GM13976 (cell line): ENCODE measurements at regions of chr1 and their contacts with region 1.

Region 1: GRCh38 chr1:22889213-22889827 is 83.3 kb downstream of the LACTBL1 start:
- DNase-seq: peak; percentile 67
- CTCF ChIP-seq: peak; percentile 39

Region 2: DNA sequence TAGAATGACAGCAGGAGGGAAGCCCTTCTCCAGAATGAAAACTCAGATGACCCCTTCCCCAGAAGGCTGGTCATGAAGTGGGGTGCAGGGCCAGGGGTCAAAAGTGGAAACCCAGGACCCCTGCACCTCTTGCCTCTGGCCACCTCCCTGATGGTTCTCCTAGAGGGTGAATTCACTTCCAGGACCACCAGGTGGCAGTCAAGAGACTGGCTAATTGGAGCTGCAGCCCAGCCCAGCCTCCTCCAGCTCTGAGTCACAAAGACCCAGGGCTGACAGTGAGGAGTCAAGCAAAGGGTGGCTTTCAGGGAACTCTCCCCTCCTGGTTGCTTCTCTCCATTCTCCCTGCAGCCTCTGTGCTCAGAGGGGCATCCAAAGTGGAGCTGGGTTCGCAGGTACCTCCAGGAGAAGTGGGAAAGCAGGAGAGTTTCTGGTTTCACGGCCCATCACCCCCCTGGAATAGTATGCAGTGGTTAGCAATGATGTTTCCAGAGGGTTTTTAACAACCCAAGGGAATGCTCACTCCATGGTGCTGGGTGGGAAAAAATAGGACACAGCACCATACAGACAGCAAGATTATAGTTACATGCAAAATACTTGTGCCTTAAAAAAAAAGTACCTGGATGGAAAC is 184.8 kb before region 1 on chr1:
- in situ Hi-C with region 1: loop called (anchors 10 kb)
- DNase-seq: peak; percentile 81
- CTCF ChIP-seq: peak; percentile 78

Region 3: GRCh38 chr1:22930235-22930912 is 41.1 kb after region 1 on chr1:
- in situ Hi-C with region 1: no loop called
- DNase-seq: peak; percentile 75
- CTCF ChIP-seq: peak; percentile 59

Region 4: GRCh38 chr1:23904748-23905357 is 1015.5 kb after region 1 on chr1:
- in situ Hi-C with region 1: no loop called
- DNase-seq: no peak
- CTCF ChIP-seq: no peak